ENCODE measurements at regions of chr4 and their contacts with region 1.

Region 1: GRCh38 chr4:27176400-27176799 is 315.8 kb downstream of the STIM2 start:
- DNase-seq: peak; percentile 14
- ATAC-seq: peak; percentile 89
- H3K4me3 ChIP-seq: no peak overlapping the region
- H3K27ac ChIP-seq: no peak overlapping the region
- H3K4me1 ChIP-seq: no peaks in the 10 kb centered on the region
- H3K27me3 ChIP-seq: no peaks in the 10 kb centered on the region
- CTCF ChIP-seq: peak; percentile 64
- EP300 ChIP-seq: no peak
- POLR2A ChIP-seq: no peak
- RAD21 ChIP-seq: no peak

Region 2: DNA sequence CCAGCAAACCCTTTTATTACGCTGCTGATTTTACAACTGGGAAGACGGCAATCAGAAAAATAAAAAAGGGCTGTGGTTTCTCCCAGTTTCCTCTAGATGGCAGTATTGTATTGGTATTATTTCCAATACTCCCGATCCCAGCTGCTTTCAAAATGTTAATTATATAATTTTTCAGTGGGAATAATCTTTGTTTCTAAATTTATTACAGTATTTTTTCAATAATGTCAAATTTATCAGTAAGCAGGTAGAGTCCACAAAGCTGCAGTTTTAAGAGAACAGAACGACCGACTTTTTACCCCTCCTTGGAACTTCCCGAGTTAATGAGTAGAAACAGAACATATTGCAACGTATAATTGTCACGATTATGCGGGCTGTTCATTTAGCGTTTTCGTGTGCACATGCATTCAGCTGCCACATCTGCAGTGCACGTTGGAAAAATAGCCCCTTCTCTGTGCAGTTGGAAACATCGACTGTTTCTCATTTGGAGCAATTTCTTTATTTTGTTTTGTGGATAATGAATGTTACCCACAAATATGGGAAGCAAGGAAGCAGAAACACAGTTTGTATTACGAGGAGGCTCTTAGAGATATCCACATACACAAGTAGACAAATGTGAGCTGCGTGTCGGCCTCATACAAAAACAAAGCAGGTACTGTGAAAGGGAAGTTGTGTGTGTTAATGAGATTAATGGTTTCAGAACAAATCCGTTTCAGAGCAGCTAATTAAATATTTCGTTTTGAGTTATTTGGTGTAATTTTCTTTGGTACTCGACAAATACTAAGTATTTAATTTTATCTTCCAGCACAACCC is 127.8 kb before region 1 on chr4:
- CTCF ChIA-PET with region 1: no interaction called
- POLR2A ChIA-PET with region 1: no interaction called
- in situ Hi-C with region 1: no loop called
- intact Hi-C with region 1: loop called (anchors 5 kb)
- DNase-seq: no peak
- ATAC-seq: peak; percentile 33; the same call in 1 of the 3 replicates
- H3K4me3 ChIP-seq: no peak overlapping the region
- H3K27ac ChIP-seq: no peak overlapping the region
- H3K4me1 ChIP-seq: peaks cover 2% of the 10 kb centered on the region
- H3K27me3 ChIP-seq: peaks cover 3 to 39% of the 10 kb centered on the region in 2 experiments; a peak in 3 of 5 replicates
- CTCF ChIP-seq: peak; percentile 61
- EP300 ChIP-seq: no peak
- POLR2A ChIP-seq: no peak
- RAD21 ChIP-seq: no peak

Region 3: DNA sequence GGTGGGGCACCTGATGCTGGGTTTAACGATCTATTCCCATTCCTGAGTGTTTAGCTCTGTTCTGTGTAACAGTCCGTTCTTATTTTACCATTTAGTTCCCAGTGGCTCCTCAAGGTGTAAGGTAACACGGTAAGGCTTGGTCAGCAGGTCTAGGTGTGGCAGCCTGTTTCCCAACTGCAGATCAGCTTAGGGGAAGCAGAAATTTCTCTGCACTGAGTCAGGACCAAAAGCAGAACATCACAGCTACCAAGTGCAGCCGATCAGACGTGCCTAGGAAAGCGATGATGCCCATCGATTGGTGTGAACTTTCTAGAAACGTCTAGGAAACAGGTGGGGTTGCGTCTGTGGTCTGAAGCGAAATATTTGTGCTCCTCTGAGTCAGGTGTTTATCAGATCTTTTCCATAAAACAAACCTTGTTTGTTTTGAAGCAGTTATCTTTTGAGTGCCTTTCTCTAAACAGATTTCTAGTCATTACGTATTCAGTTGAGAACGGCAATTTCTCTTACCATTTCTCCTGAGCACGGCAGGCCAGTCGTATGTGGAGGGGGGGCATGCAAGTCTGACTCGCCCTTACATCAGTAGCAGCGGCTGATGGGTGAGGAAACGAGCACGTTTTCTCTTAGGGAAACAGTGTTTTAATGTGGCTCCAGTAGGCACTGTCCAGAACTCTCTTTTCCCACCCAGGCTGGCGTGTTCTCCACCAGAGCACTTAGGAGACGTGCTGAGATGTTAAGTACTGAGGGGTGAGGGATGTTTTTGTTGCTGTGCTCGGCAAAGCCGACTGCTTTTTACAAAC is 75.5 kb before region 1 on chr4:
- CTCF ChIA-PET with region 1: no interaction called
- POLR2A ChIA-PET with region 1: no interaction called
- in situ Hi-C with region 1: no loop called
- intact Hi-C with region 1: no loop called
- DNase-seq: no peak
- ATAC-seq: no peak
- H3K4me3 ChIP-seq: no peak overlapping the region
- H3K27ac ChIP-seq: no peak overlapping the region
- H3K4me1 ChIP-seq: no peaks in the 10 kb centered on the region
- H3K27me3 ChIP-seq: peaks cover 2 to 14% of the 10 kb centered on the region in 2 experiments; a peak in 2 of 5 replicates
- CTCF ChIP-seq: no peak
- EP300 ChIP-seq: no peak
- POLR2A ChIP-seq: no peak
- RAD21 ChIP-seq: no peak

Region 4: GRCh38 chr4:27149541-27150212 is 26.7 kb before region 1 on chr4:
- CTCF ChIA-PET with region 1: no interaction called
- POLR2A ChIA-PET with region 1: no interaction called
- in situ Hi-C with region 1: no loop called
- intact Hi-C with region 1: no loop called
- DNase-seq: no peak
- ATAC-seq: no peak
- H3K4me3 ChIP-seq: no peak overlapping the region
- H3K27ac ChIP-seq: no peak overlapping the region
- H3K4me1 ChIP-seq: no peaks in the 10 kb centered on the region
- H3K27me3 ChIP-seq: no peaks in the 10 kb centered on the region
- CTCF ChIP-seq: no peak
- EP300 ChIP-seq: no peak
- POLR2A ChIP-seq: no peak
- RAD21 ChIP-seq: no peak

Region 5: DNA sequence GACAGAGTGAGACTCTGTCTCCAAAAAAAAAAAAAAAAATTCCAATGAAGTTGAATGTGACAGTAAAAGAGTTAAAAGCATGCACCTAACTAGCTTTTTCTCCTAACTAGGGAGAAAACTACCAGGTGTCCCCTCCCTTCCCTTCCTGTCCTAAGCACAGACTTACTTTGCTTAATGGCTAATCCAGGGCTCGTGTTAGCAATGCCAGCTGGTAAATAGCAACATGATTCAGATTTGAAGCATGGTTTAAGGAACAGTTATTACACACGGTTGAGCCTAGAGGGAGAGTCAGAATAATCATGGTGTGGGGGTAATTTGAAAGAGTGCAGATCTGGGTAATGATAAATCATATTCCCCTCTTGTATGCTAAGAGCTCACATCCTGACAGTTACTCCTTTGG is 22.6 kb after region 1 on chr4:
- CTCF ChIA-PET with region 1: no interaction called
- POLR2A ChIA-PET with region 1: no interaction called
- in situ Hi-C with region 1: no loop called
- intact Hi-C with region 1: no loop called
- DNase-seq: no peak
- ATAC-seq: no peak
- H3K4me3 ChIP-seq: no peak overlapping the region
- H3K27ac ChIP-seq: no peak overlapping the region
- H3K4me1 ChIP-seq: no peaks in the 10 kb centered on the region
- H3K27me3 ChIP-seq: no peaks in the 10 kb centered on the region
- CTCF ChIP-seq: no peak
- EP300 ChIP-seq: no peak
- POLR2A ChIP-seq: no peak
- RAD21 ChIP-seq: no peak

Region 6: GRCh38 chr4:27223326-27223725 is 46.9 kb after region 1 on chr4:
- CTCF ChIA-PET with region 1: no interaction called
- POLR2A ChIA-PET with region 1: no interaction called
- in situ Hi-C with region 1: no loop called
- intact Hi-C with region 1: no loop called
- DNase-seq: no peak
- ATAC-seq: no peak
- H3K4me3 ChIP-seq: no peak overlapping the region
- H3K27ac ChIP-seq: no peak overlapping the region
- H3K4me1 ChIP-seq: no peaks in the 10 kb centered on the region
- H3K27me3 ChIP-seq: peaks cover 0 to 5% of the 10 kb centered on the region in 2 experiments; a peak in 1 of 5 replicates
- CTCF ChIP-seq: no peak
- EP300 ChIP-seq: no peak
- POLR2A ChIP-seq: no peak
- RAD21 ChIP-seq: no peak

Region 7: GRCh38 chr4:27318743-27319142 is 142.3 kb after region 1 on chr4:
- CTCF ChIA-PET with region 1: no interaction called
- POLR2A ChIA-PET with region 1: no interaction called
- in situ Hi-C with region 1: no loop called
- intact Hi-C with region 1: loop called (anchors 1 kb)
- DNase-seq: peak; percentile 22
- ATAC-seq: peak; percentile 84
- H3K4me3 ChIP-seq: no peak overlapping the region
- H3K27ac ChIP-seq: no peak overlapping the region
- H3K4me1 ChIP-seq: no peaks in the 10 kb centered on the region
- H3K27me3 ChIP-seq: no peaks in the 10 kb centered on the region
- CTCF ChIP-seq: peak; percentile 66
- EP300 ChIP-seq: no peak
- POLR2A ChIP-seq: no peak
- RAD21 ChIP-seq: 0 out of 2 replicates have a peak, but pooled peaks have one; percentile 26

Measured in HepG2 (cell line).